Lower leg skin (tissue), 4 donors: ENCODE measurements at regions of chr19 and their contacts with region 1.

Region 1: GRCh38 chr19:5048091-5048726 is 79.3 kb downstream of the KDM4B start:
- DNase-seq: peak; percentile 81 to 97
- H3K4me3 ChIP-seq: no peak overlapping the region
- CTCF ChIP-seq: peak in 1 of 3 donors; percentile 98
- POLR2A ChIP-seq: no peak

Region 2: DNA sequence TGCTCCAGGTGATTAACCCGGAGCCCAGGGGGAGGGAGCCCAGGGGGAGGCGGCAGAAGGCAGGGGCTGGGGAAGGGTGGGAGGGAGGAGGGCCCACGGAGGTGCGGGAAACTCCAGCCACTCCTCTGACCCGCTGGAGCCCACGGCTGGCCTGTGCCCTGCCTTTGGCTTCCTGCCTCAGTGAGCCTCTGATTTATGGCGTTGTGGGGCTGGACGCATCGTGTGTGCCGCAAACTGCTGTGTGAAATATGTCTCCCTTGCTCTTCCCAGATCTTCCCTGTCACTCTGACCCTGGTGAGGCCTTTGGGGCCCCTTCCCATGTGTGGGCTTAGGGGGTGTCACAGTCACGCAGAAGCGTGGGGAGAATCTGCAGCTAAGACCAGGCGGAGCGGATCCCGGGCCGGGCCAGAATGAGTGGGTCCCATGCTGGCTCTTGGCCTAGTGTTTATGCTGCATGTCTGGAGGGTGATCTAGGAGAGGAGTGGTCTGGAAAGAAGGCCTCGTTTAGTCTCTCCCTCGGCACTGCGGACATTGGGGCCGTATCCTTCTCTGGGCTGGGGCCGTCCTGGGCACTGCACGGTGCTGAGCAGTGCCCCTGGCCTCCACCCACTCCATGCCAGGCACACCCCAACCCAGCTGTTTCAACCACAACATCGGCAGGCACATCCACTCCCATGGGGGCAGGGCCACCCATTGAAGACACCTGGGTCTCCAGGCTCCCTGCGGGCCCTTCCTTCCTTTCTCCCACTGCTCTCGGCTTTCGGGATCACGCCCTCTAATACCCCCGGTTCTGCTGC is 43.7 kb after region 1 on chr19:
- intact Hi-C with region 1: loop called (anchors 1 kb)
- DNase-seq: no peak
- H3K4me3 ChIP-seq: no peak overlapping the region
- CTCF ChIP-seq: no peak
- POLR2A ChIP-seq: no peak

Region 3: GRCh38 chr19:5536337-5536894 is 488.2 kb after region 1 on chr19:
- intact Hi-C with region 1: no loop called
- DNase-seq: no peak
- H3K4me3 ChIP-seq: no peak overlapping the region
- CTCF ChIP-seq: no peak
- POLR2A ChIP-seq: no peak

Region 4: DNA sequence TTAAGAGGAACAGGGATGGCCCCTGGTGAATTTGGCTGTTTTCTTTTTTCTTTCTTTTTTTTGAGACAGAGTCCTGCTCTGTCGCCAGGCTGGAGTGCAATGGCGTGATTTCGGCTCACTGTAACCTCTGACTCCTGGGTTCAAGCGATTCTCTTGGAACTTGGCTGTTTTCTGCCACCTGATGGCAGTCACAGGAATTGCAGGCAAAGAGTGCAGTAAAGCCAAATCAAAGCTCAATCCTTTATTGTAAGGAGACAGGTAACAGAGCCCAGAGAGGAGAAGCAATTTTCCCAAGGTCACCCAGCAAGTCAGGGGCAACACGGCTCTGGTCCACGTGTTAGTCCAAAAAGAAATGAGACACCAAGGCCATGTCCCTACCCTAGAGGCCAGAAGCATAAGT is 513.4 kb after region 1 on chr19:
- intact Hi-C with region 1: loop called (anchors 5 kb)
- DNase-seq: no peak
- H3K4me3 ChIP-seq: no peak overlapping the region
- CTCF ChIP-seq: no peak
- POLR2A ChIP-seq: no peak

Region 5: DNA sequence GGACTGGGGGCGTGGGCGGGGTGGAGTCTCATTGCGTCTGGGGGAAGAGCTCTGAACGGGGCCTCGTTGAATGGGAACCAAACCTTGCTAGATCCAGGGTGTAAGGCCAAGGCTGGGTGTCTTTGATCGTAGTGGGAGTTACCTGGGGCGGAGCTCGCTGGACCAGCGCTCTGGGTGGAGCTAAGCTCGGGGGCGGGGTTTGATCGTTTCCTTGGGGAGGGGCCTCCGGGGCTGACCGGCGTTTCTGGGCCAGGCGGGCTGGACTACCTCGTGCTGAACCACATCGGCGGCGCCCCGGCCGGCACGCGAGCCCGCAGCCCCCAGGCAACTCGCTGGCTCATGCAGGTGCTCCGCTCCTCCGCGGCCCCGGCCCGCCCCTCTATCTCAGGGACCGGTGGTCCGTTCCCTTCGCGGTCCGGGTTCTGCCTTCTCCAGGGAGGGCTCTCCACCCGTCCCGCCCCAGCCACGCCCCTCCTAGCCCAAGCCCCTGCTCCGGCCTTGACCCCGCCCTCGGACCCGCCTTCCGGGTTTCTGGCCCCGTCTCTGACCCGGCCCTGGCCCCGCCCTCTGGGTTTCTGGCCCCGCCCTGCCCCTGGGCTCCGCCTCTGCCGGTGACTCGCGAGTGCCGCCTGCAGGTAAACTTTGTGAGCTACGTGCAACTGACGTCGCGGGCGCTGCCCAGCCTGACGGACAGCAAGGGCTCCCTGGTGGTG is 638.6 kb after region 1 on chr19:
- intact Hi-C with region 1: loop called (anchors 10 kb)
- DNase-seq: peak; percentile 96 to 100
- H3K4me3 ChIP-seq: peak overlapping the region; percentile 13
- CTCF ChIP-seq: peak in 1 of 3 donors; percentile 42
- POLR2A ChIP-seq: no peak